GM23248 (cell line): ENCODE measurements at regions of chr15 and their contacts with region 1.

Region 1: GRCh38 chr15:33700695-33701304 is 267.5 kb upstream of the CHRM5 start:
- DNase-seq: peak; percentile 77
- H3K4me3 ChIP-seq: no peak overlapping the region
- H3K27ac ChIP-seq: no peak overlapping the region
- H3K4me1 ChIP-seq: no peaks in the 10 kb centered on the region
- H3K27me3 ChIP-seq: peaks cover 39% of the 10 kb centered on the region

Region 2: GRCh38 chr15:33234014-33234461 is 466.8 kb before region 1 on chr15:
- in situ Hi-C with region 1: loop called (anchors 10 kb)
- DNase-seq: peak; percentile 69
- H3K4me3 ChIP-seq: no peak overlapping the region
- H3K27ac ChIP-seq: no peak overlapping the region
- H3K4me1 ChIP-seq: no peaks in the 10 kb centered on the region
- H3K27me3 ChIP-seq: peaks cover 13% of the 10 kb centered on the region

Region 3: DNA sequence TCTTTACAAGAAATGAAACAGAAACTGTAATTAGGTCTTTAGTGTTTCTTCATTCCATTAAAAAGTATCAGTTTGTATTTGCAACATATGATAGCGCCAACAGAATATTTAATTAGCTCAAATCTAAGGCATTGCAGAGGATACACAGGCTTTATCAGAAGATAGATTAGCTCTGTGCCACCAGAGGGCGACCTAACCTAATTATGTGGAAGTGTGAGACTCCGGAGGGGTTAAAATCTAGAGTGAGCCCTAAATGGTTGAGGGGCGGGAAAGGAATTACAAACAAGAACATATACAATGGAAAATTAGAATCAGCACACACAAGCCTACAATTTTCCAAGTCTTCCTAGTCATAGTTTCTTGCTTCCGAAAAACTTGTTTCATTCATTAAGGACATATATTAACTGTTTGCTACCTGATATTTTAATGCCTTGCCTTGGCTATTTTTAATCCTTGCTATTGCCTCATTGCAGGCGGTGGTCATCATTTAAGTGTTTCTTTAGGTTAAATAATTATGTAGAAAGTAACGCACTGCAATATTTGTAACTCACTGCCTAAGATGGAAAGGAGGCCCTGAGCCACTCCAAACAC is 408.0 kb before region 1 on chr15:
- in situ Hi-C with region 1: loop called (anchors 5 kb)
- DNase-seq: peak; percentile 73
- H3K4me3 ChIP-seq: no peak overlapping the region
- H3K27ac ChIP-seq: no peak overlapping the region
- H3K4me1 ChIP-seq: no peaks in the 10 kb centered on the region
- H3K27me3 ChIP-seq: peaks cover 13% of the 10 kb centered on the region; the same call in 1 of the 2 replicates